HepG2 (cell line): ENCODE measurements at regions of chr5 and their contacts with region 1.

Region 1: DNA sequence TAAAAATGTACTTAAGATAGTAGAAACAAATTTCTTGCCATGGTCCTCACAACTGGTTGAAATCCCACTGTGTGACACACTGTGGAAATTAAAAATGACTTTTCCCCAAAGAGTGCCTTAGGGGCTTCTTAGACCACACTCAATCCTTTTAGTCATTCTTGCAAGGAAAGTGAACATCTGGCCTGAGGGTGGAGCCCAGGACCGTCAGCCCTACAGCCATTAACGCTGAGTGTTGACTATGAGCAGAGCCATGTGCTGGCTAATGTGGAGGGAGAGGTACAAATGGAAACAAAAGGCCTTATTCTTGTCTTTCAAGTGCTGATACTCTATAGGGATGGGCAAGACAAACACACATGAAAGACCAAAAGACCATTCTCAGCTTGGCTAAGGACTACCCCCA is 456.5 kb downstream of the ZSWIM6 start:
- DNase-seq: no peak
- ATAC-seq: no peak
- H3K4me3 ChIP-seq: no peak overlapping the region
- H3K27ac ChIP-seq: no peak overlapping the region
- H3K4me1 ChIP-seq: peaks cover 11% of the 10 kb centered on the region
- H3K27me3 ChIP-seq: no peaks in the 10 kb centered on the region; a peak in 1 of 5 replicates
- CTCF ChIP-seq: no peak
- EP300 ChIP-seq: no peak
- POLR2A ChIP-seq: no peak
- RAD21 ChIP-seq: no peak

Region 2: GRCh38 chr5:61768692-61769281 is 19.8 kb before region 1 on chr5:
- CTCF ChIA-PET with region 1: no interaction called
- POLR2A ChIA-PET with region 1: no interaction called
- in situ Hi-C with region 1: no loop called
- intact Hi-C with region 1: no loop called
- DNase-seq: peak; percentile 70
- ATAC-seq: peak; percentile 100
- H3K4me3 ChIP-seq: no peak overlapping the region
- H3K27ac ChIP-seq: no peak overlapping the region
- H3K4me1 ChIP-seq: no peaks in the 10 kb centered on the region
- H3K27me3 ChIP-seq: no peaks in the 10 kb centered on the region; a peak in 1 of 5 replicates
- CTCF ChIP-seq: peak; percentile 72
- EP300 ChIP-seq: no peak
- POLR2A ChIP-seq: no peak
- RAD21 ChIP-seq: peak; percentile 48; the same call in 1 of the 2 replicates

Region 3: DNA sequence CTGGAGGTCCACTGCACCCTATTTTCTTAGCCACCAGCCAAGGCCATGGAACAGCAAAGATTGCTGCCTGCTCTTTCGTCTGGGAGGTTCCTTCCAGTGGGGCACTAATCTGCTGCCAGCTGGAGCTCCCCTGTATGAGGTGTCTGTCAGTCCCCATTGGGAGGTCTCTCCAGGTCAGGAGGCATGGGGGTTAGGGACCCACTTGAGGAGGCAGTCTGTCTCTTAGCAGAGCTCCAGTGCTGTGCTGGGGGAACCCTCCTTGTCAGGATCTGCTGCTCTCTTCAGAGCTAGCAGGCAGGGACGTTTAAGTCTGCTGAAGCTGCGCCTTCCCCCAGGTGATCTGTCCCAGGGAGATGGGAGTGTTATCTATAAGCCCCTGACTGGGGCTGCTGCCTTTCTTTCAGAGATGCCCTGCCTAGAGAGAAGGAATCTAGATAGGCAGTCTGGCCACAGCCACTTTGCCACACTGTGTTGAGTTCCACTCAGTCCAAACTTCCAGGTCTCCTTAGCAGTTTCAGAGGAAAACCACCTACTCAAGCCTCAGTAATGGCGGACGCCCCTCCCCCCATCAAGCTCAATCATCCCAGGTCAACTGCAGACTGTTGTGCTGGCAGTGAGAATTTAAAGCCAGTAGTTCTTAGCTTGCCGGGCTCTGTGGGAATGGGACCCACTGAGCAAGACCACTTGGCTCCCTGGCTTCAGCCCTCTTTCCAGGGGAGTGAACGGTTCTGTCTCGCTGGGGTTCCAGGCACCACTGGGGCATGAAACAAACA is 1107.8 kb after region 1 on chr5:
- CTCF ChIA-PET with region 1: no interaction called
- POLR2A ChIA-PET with region 1: no interaction called
- in situ Hi-C with region 1: no loop called
- intact Hi-C with region 1: loop called (anchors 5 kb)
- DNase-seq: no peak
- ATAC-seq: no peak
- H3K4me3 ChIP-seq: no peak overlapping the region
- H3K27ac ChIP-seq: no peak overlapping the region
- H3K4me1 ChIP-seq: no peaks in the 10 kb centered on the region
- H3K27me3 ChIP-seq: no peaks in the 10 kb centered on the region
- CTCF ChIP-seq: no peak
- EP300 ChIP-seq: no peak
- POLR2A ChIP-seq: no peak
- RAD21 ChIP-seq: no peak